CD4-positive, alpha-beta memory T cell (primary cell): ENCODE measurements at regions of chr14 and their contacts with region 1.

Region 1: DNA sequence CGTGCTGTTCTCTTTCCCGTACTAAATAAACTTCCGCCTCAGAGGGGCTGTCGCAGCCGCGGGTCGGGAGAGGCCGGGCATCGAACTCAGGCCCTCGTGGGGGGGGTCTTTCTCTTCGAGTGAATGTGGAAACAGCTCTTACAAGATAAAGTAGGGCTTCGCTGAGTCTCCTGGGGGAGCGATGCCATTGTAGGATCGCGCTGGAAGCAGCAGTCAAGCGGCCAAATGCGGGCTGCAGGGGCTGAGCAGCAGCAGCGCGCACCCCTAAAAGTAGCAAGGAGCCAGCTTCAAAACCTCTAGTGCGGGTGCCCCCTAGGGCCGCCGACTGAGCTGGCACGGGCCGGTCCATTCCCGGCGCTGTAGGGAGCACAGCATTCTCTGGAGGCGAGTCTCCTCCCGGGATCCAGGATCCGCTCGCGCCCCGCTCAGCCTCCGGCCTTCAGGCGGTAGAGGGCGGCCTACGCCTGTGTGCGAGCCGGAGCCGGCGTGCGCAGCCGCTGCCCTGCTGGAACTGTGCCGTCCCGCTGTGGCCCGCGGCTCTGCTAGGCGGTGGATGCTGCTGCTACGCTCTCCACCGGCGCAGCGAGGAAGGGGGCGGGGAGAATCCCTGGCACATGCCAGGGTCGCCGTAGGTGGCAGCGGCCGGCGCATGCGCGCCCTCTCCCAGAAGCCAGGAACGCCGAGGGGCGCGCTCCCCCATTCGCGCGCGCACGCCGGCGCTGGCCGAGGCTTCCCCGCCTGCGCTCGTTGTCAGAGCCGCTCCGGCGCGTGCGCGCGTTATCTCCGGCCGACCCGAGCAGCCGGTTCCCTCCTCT is at the start of gene FUT8:
- DNase-seq: peak; percentile 91 to 97 (median 95)
- H3K4me3 ChIP-seq: peak within 1 kb of the TSS; percentile 93 to 97
- H3K4me3 Mint-ChIP-seq: peak within 1 kb of the TSS; percentile 97 to 100 (median 99)
- H3K27ac ChIP-seq: peak within 1 kb of the TSS; percentile 79
- H3K27ac Mint-ChIP-seq: peak within 1 kb of the TSS; percentile 80 to 99 (median 98)
- H3K4me1 ChIP-seq: peaks cover 35% of the 10 kb centered on the region
- H3K4me1 Mint-ChIP-seq: peaks cover 27 to 45% (median 35%) of the 10 kb centered on the region in 4 donors
- H3K27me3 ChIP-seq: no peaks in the 10 kb centered on the region
- H3K27me3 Mint-ChIP-seq: no peaks in the 10 kb centered on the region
- total RNA-seq, gene FUT8: 49.3 to 51.0 TPM

Region 2: GRCh38 chr14:65102441-65103149 is 309.6 kb before region 1 on chr14 and contains the start of gene MAX:
- CTCF ChIA-PET with region 1: no interaction called
- POLR2A ChIA-PET with region 1: interaction called, 7 read pairs
- intact Hi-C with region 1: loop called (anchors 1 kb)
- DNase-seq: peak; percentile 98 to 100 (median 100)
- H3K4me3 ChIP-seq: peak within 1 kb of the TSS; percentile 77 to 100
- H3K4me3 Mint-ChIP-seq: peak within 1 kb of the TSS; percentile 91 to 100 (median 96)
- H3K27ac ChIP-seq: peak within 1 kb of the TSS; percentile 96
- H3K27ac Mint-ChIP-seq: peak within 1 kb of the TSS; percentile 92 to 99 (median 97)
- H3K4me1 ChIP-seq: peaks cover 41% of the 10 kb centered on the region
- H3K4me1 Mint-ChIP-seq: peaks cover 24 to 49% (median 35%) of the 10 kb centered on the region in 4 donors
- H3K27me3 ChIP-seq: no peaks in the 10 kb centered on the region
- H3K27me3 Mint-ChIP-seq: peaks cover 2 to 3% of the 10 kb centered on the region in 2 donors
- total RNA-seq, gene MAX: 188 to 212 TPM

Region 3: DNA sequence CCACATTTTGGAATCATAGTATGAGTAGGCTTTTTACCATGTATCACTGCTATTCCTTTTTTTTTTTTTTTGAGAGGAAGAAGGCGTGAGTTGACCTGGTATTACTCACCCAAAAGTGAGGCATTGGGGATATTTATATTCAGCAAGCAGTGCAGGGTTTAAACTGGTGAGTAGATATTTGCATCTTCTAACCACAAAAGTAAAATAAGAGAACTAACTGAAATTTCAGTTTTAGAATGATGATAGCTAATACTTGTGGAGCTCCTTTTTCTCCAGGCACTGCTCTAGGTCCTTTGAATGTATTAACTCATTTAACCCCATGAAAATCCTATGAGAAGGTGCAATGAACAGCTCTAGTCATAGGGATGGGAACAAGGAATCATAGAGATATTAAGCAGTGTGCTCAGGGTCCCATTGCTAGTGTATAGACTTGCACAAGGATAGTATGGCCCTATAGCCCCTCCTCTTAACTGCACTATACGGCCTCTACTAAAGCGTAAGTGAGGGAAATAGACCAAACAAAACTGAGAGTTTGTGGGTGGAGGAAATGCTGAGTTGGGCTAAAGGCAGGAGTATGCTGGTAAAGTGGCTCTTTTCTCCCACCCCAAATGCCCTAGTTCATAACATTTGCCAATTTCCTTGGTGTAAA is 205.7 kb before region 1 on chr14:
- CTCF ChIA-PET with region 1: interaction called, 11 read pairs
- POLR2A ChIA-PET with region 1: interaction called, 67 read pairs
- intact Hi-C with region 1: no loop called
- DNase-seq: no peak
- H3K4me3 ChIP-seq: no peak overlapping the region
- H3K4me3 Mint-ChIP-seq: peak overlapping the region; percentile 50 to 89 (median 82)
- H3K27ac ChIP-seq: peak overlapping the region; percentile 47
- H3K27ac Mint-ChIP-seq: peak overlapping the region; percentile 78 to 98 (median 94)
- H3K4me1 ChIP-seq: peaks cover 72% of the 10 kb centered on the region
- H3K4me1 Mint-ChIP-seq: peaks cover 50 to 77% (median 62%) of the 10 kb centered on the region in 4 donors
- H3K27me3 ChIP-seq: no peaks in the 10 kb centered on the region
- H3K27me3 Mint-ChIP-seq: no peaks in the 10 kb centered on the region

Region 4: GRCh38 chr14:65287264-65288131 is 124.7 kb before region 1 on chr14:
- CTCF ChIA-PET with region 1: interaction called, 11 read pairs
- POLR2A ChIA-PET with region 1: interaction called, 76 read pairs
- intact Hi-C with region 1: loop called (anchors 1 kb)
- DNase-seq: peak; percentile 61 to 72 (median 71)
- H3K4me3 ChIP-seq: peak overlapping the region in 1 of 2 donors; percentile 4
- H3K4me3 Mint-ChIP-seq: peak overlapping the region; percentile 80 to 94 (median 88)
- H3K27ac ChIP-seq: peak overlapping the region; percentile 53
- H3K27ac Mint-ChIP-seq: peak overlapping the region; percentile 91 to 97 (median 94)
- H3K4me1 ChIP-seq: peaks cover 67% of the 10 kb centered on the region
- H3K4me1 Mint-ChIP-seq: peaks cover 49 to 81% (median 60%) of the 10 kb centered on the region in 4 donors
- H3K27me3 ChIP-seq: no peaks in the 10 kb centered on the region
- H3K27me3 Mint-ChIP-seq: no peaks in the 10 kb centered on the region

Region 5: GRCh38 chr14:65824285-65824977 is 412.2 kb after region 1 on chr14:
- CTCF ChIA-PET with region 1: interaction called, 150 read pairs
- POLR2A ChIA-PET with region 1: interaction called, 13 read pairs
- intact Hi-C with region 1: loop called (anchors 1 kb)
- DNase-seq: peak; percentile 62 to 70 (median 64)
- H3K4me3 ChIP-seq: no peak overlapping the region
- H3K4me3 Mint-ChIP-seq: peak overlapping the region in 1 of 8 donors; percentile 10
- H3K27ac ChIP-seq: no peak overlapping the region
- H3K27ac Mint-ChIP-seq: no peak overlapping the region
- H3K4me1 ChIP-seq: peaks cover 9% of the 10 kb centered on the region
- H3K4me1 Mint-ChIP-seq: peaks cover 10 to 14% (median 11%) of the 10 kb centered on the region in 4 donors
- H3K27me3 ChIP-seq: no peaks in the 10 kb centered on the region
- H3K27me3 Mint-ChIP-seq: no peaks in the 10 kb centered on the region

Region 6: DNA sequence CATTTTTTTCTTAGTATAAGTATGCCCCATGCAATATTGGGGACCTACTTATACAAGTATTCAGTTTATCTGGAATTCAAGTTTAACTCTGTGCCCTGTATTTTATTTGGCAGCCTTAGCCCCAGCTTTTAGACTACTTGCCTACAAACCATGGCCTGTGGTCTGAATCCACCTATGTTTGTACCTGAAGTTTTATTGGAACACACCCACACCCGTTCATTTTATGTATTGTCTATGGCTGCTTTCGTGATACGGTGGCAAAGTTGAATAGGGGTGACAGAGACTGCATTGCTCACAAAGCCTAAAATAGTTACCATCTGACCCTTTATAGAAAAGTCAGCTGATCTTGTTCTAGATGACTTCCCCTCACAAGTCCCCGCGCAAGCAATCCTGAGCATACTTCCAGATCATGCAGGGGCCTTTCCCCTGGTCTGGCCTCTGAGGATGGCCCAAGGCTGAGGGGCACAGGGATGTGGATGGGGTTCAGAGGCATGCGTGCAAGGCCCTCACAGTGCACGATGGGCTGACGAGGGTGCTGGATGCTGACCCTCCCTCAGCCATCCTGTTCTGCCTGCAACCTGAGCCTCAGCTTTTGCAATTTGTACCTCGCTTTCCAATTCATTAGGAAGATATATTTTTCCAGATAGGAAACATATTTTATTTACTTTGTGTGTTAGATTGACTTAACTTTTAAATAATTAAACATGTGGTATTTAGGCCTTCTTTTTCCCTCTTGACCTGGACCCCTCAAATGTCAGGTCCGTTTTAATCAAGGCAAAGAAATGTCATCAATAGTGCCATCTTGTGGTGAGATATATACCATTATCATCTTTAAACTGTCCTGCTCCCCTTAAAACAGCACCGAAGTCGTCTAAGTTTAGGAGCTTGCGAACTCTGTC is 546.7 kb after region 1 on chr14:
- CTCF ChIA-PET with region 1: interaction called, 131 read pairs
- POLR2A ChIA-PET with region 1: interaction called, 12 read pairs
- intact Hi-C with region 1: loop called (anchors 1 kb)
- DNase-seq: peak in 4 of 5 donors; percentile 30 to 47 (median 45)
- H3K4me3 ChIP-seq: no peak overlapping the region
- H3K4me3 Mint-ChIP-seq: no peak overlapping the region
- H3K27ac ChIP-seq: no peak overlapping the region
- H3K27ac Mint-ChIP-seq: no peak overlapping the region
- H3K4me1 ChIP-seq: peaks cover 23% of the 10 kb centered on the region
- H3K4me1 Mint-ChIP-seq: peaks cover 18 to 32% (median 24%) of the 10 kb centered on the region in 4 donors
- H3K27me3 ChIP-seq: no peaks in the 10 kb centered on the region
- H3K27me3 Mint-ChIP-seq: no peaks in the 10 kb centered on the region